Cardiac septum (tissue), 1 donor: ENCODE measurements at regions of chr22 and their contacts with region 1.

Region 1: DNA sequence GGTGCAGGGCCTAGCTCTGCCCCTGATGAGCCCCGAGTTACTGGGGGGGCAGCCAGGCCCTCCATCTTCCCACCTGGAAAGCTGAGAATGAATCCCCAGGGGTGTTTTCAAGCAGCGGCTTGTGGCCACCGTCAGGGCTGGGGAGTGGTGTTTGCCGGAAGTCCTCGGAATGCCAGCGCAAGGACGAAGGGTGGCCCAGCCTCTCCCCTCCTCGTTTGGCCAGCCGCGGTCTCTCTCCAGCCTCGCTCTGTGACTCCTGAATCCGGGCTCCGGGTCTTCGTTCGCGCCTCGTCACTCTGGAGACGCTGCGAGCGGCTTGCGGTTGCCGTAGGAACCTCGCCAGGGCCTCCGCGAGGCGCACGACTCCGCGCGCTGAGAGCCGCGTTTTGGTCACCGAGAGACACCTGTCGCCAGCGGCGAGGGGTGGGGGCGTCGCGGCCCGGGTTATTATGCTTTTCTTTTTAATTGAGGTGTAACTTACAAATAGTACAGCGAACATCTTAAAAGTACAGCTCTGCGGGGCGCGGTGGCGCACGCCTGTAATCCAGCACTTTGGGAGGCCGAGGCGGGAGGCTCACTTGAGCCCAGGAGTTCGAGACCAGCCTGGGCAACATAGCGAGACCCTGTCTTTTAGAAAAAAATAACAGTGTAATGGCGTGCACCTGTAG is 6.3 kb upstream of the KDELR3 start:
- DNase-seq: peak; percentile 91

Region 2: GRCh38 chr22:38412435-38413084 is 49.0 kb before region 1 on chr22:
- intact Hi-C with region 1: loop called (anchors 10 kb)
- DNase-seq: peak; percentile 75

Region 3: GRCh38 chr22:38631724-38632123 is 170.2 kb after region 1 on chr22:
- intact Hi-C with region 1: no loop called
- DNase-seq: no peak